Activated CD8-positive, alpha-beta T cell treated with anti-CD3 and anti-CD28 coated beads, Interleukin-2, amount 10 ng/mL, durations not matched to agents 7 days and 5 days (primary cell): ENCODE measurements at regions of chr14 and their contacts with region 1.

Region 1: GRCh38 chr14:68951042-68951914 is 27.8 kb downstream of the ACTN1 start:
- DNase-seq: no peak
- ATAC-seq: no peak
- H3K4me3 Mint-ChIP-seq: no peak overlapping the region
- H3K27ac Mint-ChIP-seq: no peak overlapping the region
- H3K4me1 Mint-ChIP-seq: peaks cover 85% of the 10 kb centered on the region
- H3K27me3 Mint-ChIP-seq: no peaks in the 10 kb centered on the region

Region 2: GRCh38 chr14:68884031-68885030 is 66.9 kb before region 1 on chr14:
- CTCF ChIA-PET with region 1: no interaction called
- POLR2A ChIA-PET with region 1: no interaction called
- DNase-seq: no peak
- ATAC-seq: no peak
- H3K4me3 Mint-ChIP-seq: no peak overlapping the region
- H3K27ac Mint-ChIP-seq: no peak overlapping the region
- H3K4me1 Mint-ChIP-seq: no peaks in the 10 kb centered on the region
- H3K27me3 Mint-ChIP-seq: no peaks in the 10 kb centered on the region

Region 3: GRCh38 chr14:68926236-68926635 is 25.0 kb before region 1 on chr14:
- CTCF ChIA-PET with region 1: interaction called, 17 read pairs
- POLR2A ChIA-PET with region 1: interaction called, 3 read pairs
- DNase-seq: peak; percentile 36
- ATAC-seq: no peak
- H3K4me3 Mint-ChIP-seq: no peak overlapping the region
- H3K27ac Mint-ChIP-seq: peak overlapping the region; percentile 54
- H3K4me1 Mint-ChIP-seq: peaks cover 68% of the 10 kb centered on the region
- H3K27me3 Mint-ChIP-seq: no peaks in the 10 kb centered on the region

Region 4: GRCh38 chr14:68939893-68940613 is 11.2 kb before region 1 on chr14:
- CTCF ChIA-PET with region 1: interaction called, 22 read pairs
- POLR2A ChIA-PET with region 1: interaction called, 4 read pairs
- DNase-seq: no peak
- ATAC-seq: no peak
- H3K4me3 Mint-ChIP-seq: no peak overlapping the region
- H3K27ac Mint-ChIP-seq: peak overlapping the region; percentile 42
- H3K4me1 Mint-ChIP-seq: peaks cover 54% of the 10 kb centered on the region
- H3K27me3 Mint-ChIP-seq: no peaks in the 10 kb centered on the region

Region 5: GRCh38 chr14:68970038-68970612 is 18.8 kb after region 1 on chr14:
- CTCF ChIA-PET with region 1: interaction called, 21 read pairs
- POLR2A ChIA-PET with region 1: interaction called, 12 read pairs
- DNase-seq: peak; percentile 66
- ATAC-seq: peak; percentile 65
- H3K4me3 Mint-ChIP-seq: peak overlapping the region; percentile 8
- H3K27ac Mint-ChIP-seq: peak overlapping the region; percentile 69
- H3K4me1 Mint-ChIP-seq: peaks cover 72% of the 10 kb centered on the region
- H3K27me3 Mint-ChIP-seq: no peaks in the 10 kb centered on the region